CD4-positive, alpha-beta memory T cell (primary cell): ENCODE measurements at regions of chr13 and their contacts with region 1.

Region 1: GRCh38 chr13:46321494-46322225 is 65.4 kb downstream of the RUBCNL start:
- DNase-seq: peak; percentile 65 to 72 (median 68)
- H3K4me3 ChIP-seq: no peak overlapping the region
- H3K4me3 Mint-ChIP-seq: peak overlapping the region; percentile 70 to 87 (median 74)
- H3K27ac ChIP-seq: peak overlapping the region; percentile 18
- H3K27ac Mint-ChIP-seq: peak overlapping the region; percentile 67 to 93 (median 90)
- H3K4me1 ChIP-seq: peaks cover 15% of the 10 kb centered on the region
- H3K4me1 Mint-ChIP-seq: peaks cover 7 to 26% (median 13%) of the 10 kb centered on the region in 4 donors
- H3K27me3 ChIP-seq: no peaks in the 10 kb centered on the region
- H3K27me3 Mint-ChIP-seq: peaks cover 0 to 4% of the 10 kb centered on the region in 2 donors

Region 2: GRCh38 chr13:45511310-45512097 is 810.2 kb before region 1 on chr13:
- CTCF ChIA-PET with region 1: interaction called, 6 read pairs
- POLR2A ChIA-PET with region 1: no interaction called
- intact Hi-C with region 1: loop called (anchors 1 kb)
- DNase-seq: peak in 4 of 5 donors; percentile 55 to 68 (median 62)
- H3K4me3 ChIP-seq: no peak overlapping the region
- H3K4me3 Mint-ChIP-seq: no peak overlapping the region
- H3K27ac ChIP-seq: no peak overlapping the region
- H3K27ac Mint-ChIP-seq: peak overlapping the region; percentile 6 to 89 (median 59)
- H3K4me1 ChIP-seq: peaks cover 3% of the 10 kb centered on the region
- H3K4me1 Mint-ChIP-seq: peaks cover 4 to 11% (median 9%) of the 10 kb centered on the region in 4 donors
- H3K27me3 ChIP-seq: no peaks in the 10 kb centered on the region
- H3K27me3 Mint-ChIP-seq: no peaks in the 10 kb centered on the region

Region 3: GRCh38 chr13:45807520-45808099 is 514.0 kb before region 1 on chr13:
- CTCF ChIA-PET with region 1: interaction called, 15 read pairs
- POLR2A ChIA-PET with region 1: no interaction called
- intact Hi-C with region 1: loop called (anchors 1 kb)
- DNase-seq: peak in 4 of 5 donors; percentile 12 to 32 (median 16)
- H3K4me3 ChIP-seq: no peak overlapping the region
- H3K4me3 Mint-ChIP-seq: no peak overlapping the region
- H3K27ac ChIP-seq: no peak overlapping the region
- H3K27ac Mint-ChIP-seq: no peak overlapping the region
- H3K4me1 ChIP-seq: no peaks in the 10 kb centered on the region
- H3K4me1 Mint-ChIP-seq: peaks cover 0 to 9% (median 5%) of the 10 kb centered on the region in 4 donors
- H3K27me3 ChIP-seq: no peaks in the 10 kb centered on the region
- H3K27me3 Mint-ChIP-seq: no peaks in the 10 kb centered on the region

Region 4: DNA sequence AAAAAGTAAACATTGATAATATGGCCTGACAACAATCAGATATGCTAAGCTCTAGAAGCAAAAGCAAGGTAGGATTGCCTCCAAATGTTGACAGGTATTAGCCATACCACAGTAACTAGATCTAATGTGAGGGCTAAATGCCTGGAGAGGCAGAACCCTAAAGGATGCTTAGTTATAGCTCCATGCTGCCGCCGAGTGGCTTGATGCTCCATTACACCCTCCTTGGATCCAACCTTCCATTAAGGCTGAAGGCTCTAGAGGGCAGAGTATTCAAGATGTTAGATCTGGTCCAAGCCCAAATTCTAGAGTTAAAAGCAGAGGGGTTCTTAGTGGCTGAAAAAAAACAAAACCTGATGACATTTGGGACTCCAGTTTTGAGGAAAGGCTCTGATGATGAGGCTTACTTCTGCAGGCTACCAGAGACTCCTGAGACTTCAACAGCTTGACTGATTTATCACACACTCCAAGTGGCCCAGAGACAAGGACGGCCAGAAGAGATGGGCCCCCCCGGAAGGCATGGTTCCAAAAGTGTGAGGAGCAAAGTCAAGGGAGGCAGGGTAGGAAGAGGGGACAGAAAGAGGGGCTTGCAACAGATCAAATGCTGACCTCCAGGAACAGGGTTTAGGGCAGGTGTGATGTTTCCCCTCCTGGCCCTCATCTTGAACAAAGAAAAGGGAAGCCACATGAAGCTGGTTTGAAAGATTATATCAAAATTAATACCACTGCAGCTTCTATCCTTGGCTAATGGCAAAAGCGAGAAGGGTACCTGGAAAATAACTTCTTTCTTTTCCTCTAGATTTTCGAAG is 194.9 kb before region 1 on chr13:
- CTCF ChIA-PET with region 1: interaction called, 9 read pairs
- POLR2A ChIA-PET with region 1: no interaction called
- intact Hi-C with region 1: loop called (anchors 1 kb)
- DNase-seq: peak; percentile 58 to 72 (median 65)
- H3K4me3 ChIP-seq: no peak overlapping the region
- H3K4me3 Mint-ChIP-seq: peak overlapping the region in 1 of 8 donors; percentile 28
- H3K27ac ChIP-seq: no peak overlapping the region
- H3K27ac Mint-ChIP-seq: peak overlapping the region; percentile 62 to 94 (median 83)
- H3K4me1 ChIP-seq: peaks cover 44% of the 10 kb centered on the region
- H3K4me1 Mint-ChIP-seq: peaks cover 32 to 53% (median 44%) of the 10 kb centered on the region in 4 donors
- H3K27me3 ChIP-seq: no peaks in the 10 kb centered on the region
- H3K27me3 Mint-ChIP-seq: no peaks in the 10 kb centered on the region

Region 5: GRCh38 chr13:46160471-46161066 is 161.1 kb before region 1 on chr13:
- CTCF ChIA-PET with region 1: interaction called, 26 read pairs
- POLR2A ChIA-PET with region 1: interaction called, 4 read pairs
- intact Hi-C with region 1: loop called (anchors 1 kb)
- DNase-seq: peak; percentile 54 to 77 (median 73)
- H3K4me3 ChIP-seq: peak overlapping the region; percentile 2 to 23
- H3K4me3 Mint-ChIP-seq: peak overlapping the region; percentile 12 to 87 (median 82)
- H3K27ac ChIP-seq: peak overlapping the region; percentile 73
- H3K27ac Mint-ChIP-seq: peak overlapping the region; percentile 84 to 96 (median 94)
- H3K4me1 ChIP-seq: peaks cover 54% of the 10 kb centered on the region
- H3K4me1 Mint-ChIP-seq: peaks cover 44 to 59% (median 51%) of the 10 kb centered on the region in 4 donors
- H3K27me3 ChIP-seq: no peaks in the 10 kb centered on the region
- H3K27me3 Mint-ChIP-seq: no peaks in the 10 kb centered on the region

Region 6: DNA sequence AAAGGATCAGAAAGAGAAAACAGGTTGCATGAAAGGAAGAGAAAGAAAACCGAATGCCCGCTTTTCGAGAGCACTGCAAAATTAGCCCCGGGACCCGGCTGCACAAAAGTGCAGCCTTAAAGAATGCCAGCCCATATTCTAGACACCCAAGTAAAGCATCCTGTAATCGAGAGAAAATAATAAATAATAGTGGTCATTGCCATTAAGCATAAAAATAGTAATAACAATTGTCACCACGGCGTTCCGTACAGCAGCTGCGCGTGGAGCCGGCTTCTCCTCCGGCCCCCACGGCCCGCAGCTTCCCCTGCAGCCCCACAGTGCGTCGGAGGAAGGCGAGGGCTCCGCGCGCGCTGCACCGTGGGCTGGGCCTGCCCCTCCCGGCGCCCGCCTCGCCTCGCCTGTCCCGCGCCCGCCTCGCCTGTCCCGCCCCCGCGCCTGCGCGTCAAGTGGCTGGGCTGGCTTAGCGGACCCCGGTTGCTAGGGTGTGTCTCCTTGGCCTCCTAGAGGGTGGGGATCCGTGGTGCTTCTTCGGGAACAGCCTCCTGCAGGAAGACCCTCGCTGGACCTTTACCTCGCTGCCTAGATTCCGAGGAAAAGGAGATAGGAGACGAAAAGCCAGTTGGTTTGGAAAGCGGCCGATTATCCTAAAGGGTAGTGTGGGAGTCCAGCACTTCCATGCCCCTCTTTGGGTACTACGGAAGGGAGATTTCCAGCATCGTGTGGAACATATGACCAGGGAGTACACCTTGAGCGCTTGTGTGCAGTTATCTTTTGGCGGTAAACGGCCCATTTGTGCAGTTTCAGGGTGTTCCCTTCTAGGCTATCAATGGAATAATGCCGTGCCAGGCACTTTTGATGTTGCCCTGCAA is 109.9 kb before region 1 on chr13 and contains the start of gene LRRC63:
- CTCF ChIA-PET with region 1: interaction called, 6 read pairs
- POLR2A ChIA-PET with region 1: interaction called, 3 read pairs
- intact Hi-C with region 1: loop called (anchors 1 kb)
- DNase-seq: peak; percentile 80 to 85 (median 84)
- H3K4me3 ChIP-seq: peak within 1 kb of the TSS; percentile 49 to 56
- H3K4me3 Mint-ChIP-seq: peak within 1 kb of the TSS; percentile 85 to 97 (median 94)
- H3K27ac ChIP-seq: peak within 1 kb of the TSS; percentile 75
- H3K27ac Mint-ChIP-seq: peak within 1 kb of the TSS; percentile 83 to 97 (median 96)
- H3K4me1 ChIP-seq: peaks cover 18% of the 10 kb centered on the region
- H3K4me1 Mint-ChIP-seq: peaks cover 9 to 30% (median 18%) of the 10 kb centered on the region in 4 donors
- H3K27me3 ChIP-seq: no peaks in the 10 kb centered on the region
- H3K27me3 Mint-ChIP-seq: no peaks in the 10 kb centered on the region
- total RNA-seq, gene LRRC63: 0.49 to 0.75 TPM

Region 7: DNA sequence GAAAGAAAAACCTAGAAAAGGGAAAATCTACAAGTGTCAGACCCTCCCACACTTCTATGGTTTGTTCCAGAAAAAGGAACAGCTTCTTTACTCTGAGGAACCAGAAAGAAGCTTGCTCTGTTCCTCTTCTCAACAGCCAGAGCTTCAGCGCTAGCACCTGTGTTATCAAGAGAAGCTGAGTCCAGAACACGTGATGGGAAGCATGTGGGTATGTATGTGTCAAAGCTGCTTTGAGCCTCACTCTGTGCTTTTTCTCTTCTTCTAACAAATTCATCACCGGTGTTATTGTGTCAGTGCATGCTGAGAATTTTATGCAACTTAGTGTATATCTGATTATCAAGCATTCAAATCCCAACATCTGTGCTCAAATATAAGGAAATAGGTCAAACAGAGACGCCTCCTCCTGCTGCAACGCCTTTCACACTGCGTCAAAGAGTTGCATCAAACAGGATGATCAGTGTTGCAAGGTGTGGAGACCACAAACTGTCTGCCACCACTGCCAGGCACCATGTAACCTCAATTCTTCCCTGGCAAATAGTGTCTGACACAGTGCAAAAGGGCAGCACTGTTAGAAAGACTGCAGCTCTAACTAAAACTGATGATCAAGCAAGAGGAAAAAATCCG is 26.1 kb before region 1 on chr13:
- CTCF ChIA-PET with region 1: interaction called, 166 read pairs
- POLR2A ChIA-PET with region 1: interaction called, 20 read pairs
- intact Hi-C with region 1: loop called (anchors 1 kb)
- DNase-seq: peak; percentile 85 to 91 (median 86)
- H3K4me3 ChIP-seq: peak overlapping the region in 1 of 2 donors; percentile 26
- H3K4me3 Mint-ChIP-seq: peak overlapping the region; percentile 43 to 85 (median 75)
- H3K27ac ChIP-seq: peak overlapping the region; percentile 57
- H3K27ac Mint-ChIP-seq: peak overlapping the region; percentile 87 to 99 (median 96)
- H3K4me1 ChIP-seq: peaks cover 45% of the 10 kb centered on the region
- H3K4me1 Mint-ChIP-seq: peaks cover 38 to 65% (median 50%) of the 10 kb centered on the region in 4 donors
- H3K27me3 ChIP-seq: no peaks in the 10 kb centered on the region
- H3K27me3 Mint-ChIP-seq: no peaks in the 10 kb centered on the region

Region 8: DNA sequence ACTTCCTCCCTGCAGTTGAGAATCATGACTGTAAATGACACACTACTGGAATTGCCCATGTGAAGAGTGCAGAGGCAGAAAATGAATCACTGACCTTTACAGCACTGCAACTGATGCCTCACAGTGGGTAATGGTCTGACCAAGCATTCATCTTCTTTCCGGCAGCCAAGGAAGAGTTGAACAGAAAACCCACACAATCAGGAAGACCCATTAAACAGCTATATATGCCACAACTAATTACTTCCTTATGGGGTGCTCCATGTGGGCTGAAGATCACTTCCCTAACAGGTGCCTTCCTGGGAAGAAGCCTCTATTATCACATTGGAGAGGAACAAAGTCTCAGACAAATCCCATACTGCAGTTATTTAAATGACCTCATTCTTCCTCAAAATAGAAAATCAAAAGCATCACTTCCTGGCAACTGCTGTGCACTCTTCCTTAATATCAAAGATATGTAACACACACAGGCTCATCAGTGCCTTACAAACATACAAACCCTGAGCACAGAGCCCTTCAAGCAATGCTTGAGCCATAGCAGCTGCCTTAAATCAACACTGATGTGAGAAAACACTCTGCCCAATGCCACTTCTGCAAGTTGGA is 19.6 kb after region 1 on chr13:
- CTCF ChIA-PET with region 1: no interaction called
- POLR2A ChIA-PET with region 1: no interaction called
- intact Hi-C with region 1: no loop called
- DNase-seq: no peak
- H3K4me3 ChIP-seq: no peak overlapping the region
- H3K4me3 Mint-ChIP-seq: no peak overlapping the region
- H3K27ac ChIP-seq: no peak overlapping the region
- H3K27ac Mint-ChIP-seq: peak overlapping the region in 2 of 7 donors; percentile 24 to 65
- H3K4me1 ChIP-seq: peaks cover 9% of the 10 kb centered on the region
- H3K4me1 Mint-ChIP-seq: peaks cover 7 to 15% (median 11%) of the 10 kb centered on the region in 4 donors
- H3K27me3 ChIP-seq: no peaks in the 10 kb centered on the region
- H3K27me3 Mint-ChIP-seq: peaks cover under 1 to 2% of the 10 kb centered on the region in 2 donors

Region 9: GRCh38 chr13:46531953-46532352 is 210.3 kb after region 1 on chr13:
- CTCF ChIA-PET with region 1: no interaction called
- POLR2A ChIA-PET with region 1: no interaction called
- intact Hi-C with region 1: no loop called
- DNase-seq: no peak
- H3K4me3 ChIP-seq: no peak overlapping the region
- H3K4me3 Mint-ChIP-seq: no peak overlapping the region
- H3K27ac ChIP-seq: no peak overlapping the region
- H3K27ac Mint-ChIP-seq: no peak overlapping the region
- H3K4me1 ChIP-seq: no peaks in the 10 kb centered on the region
- H3K4me1 Mint-ChIP-seq: no peaks in the 10 kb centered on the region
- H3K27me3 ChIP-seq: no peaks in the 10 kb centered on the region
- H3K27me3 Mint-ChIP-seq: peaks cover 0 to 2% of the 10 kb centered on the region in 2 donors

Region 10: DNA sequence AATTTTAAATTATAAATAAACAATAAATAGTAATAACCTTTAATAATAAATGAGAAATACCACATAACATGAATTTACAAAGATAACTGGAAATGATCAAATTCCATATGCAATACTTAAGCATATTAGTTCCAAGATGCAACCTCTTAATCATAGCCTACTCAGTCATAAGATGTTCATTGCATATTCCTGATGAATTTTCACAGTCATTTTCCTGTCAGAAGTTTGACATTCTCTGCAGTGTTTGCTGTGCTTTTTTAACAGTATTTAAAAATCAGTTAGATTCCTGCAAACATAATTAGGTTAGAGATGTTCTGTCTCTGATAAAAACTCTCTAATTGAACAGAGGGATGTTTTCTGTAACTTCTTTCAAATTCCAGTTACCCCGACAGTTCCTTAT is 603.8 kb after region 1 on chr13:
- CTCF ChIA-PET with region 1: no interaction called
- POLR2A ChIA-PET with region 1: no interaction called
- intact Hi-C with region 1: no loop called
- DNase-seq: no peak
- H3K4me3 ChIP-seq: no peak overlapping the region
- H3K4me3 Mint-ChIP-seq: no peak overlapping the region
- H3K27ac ChIP-seq: no peak overlapping the region
- H3K27ac Mint-ChIP-seq: no peak overlapping the region
- H3K4me1 ChIP-seq: no peaks in the 10 kb centered on the region
- H3K4me1 Mint-ChIP-seq: no peaks in the 10 kb centered on the region
- H3K27me3 ChIP-seq: no peaks in the 10 kb centered on the region
- H3K27me3 Mint-ChIP-seq: peaks cover 3 to 4% of the 10 kb centered on the region in 2 donors